IMR-90 (cell line): ENCODE measurements at regions of chr9 and their contacts with region 1.

Region 1: GRCh38 chr9:14361074-14361473 is 47.1 kb upstream of the NFIB start:
- DNase-seq: peak; percentile 37
- ATAC-seq: no peak
- H3K4me3 ChIP-seq: no peak overlapping the region
- H3K27ac ChIP-seq: no peak overlapping the region
- H3K4me1 ChIP-seq: peaks cover 3% of the 10 kb centered on the region; the same call in 1 of the 2 replicates
- H3K27me3 ChIP-seq: peaks cover 26% of the 10 kb centered on the region
- CTCF ChIP-seq: no peak
- POLR2A ChIP-seq: no peak
- RAD21 ChIP-seq: no peak

Region 2: GRCh38 chr9:12775679-12776512 is 1585.2 kb before region 1 on chr9:
- CTCF ChIA-PET with region 1: no interaction called
- POLR2A ChIA-PET with region 1: interaction called, 10 read pairs
- dilution Hi-C with region 1: no loop called
- in situ Hi-C with region 1: no loop called
- intact Hi-C with region 1: no loop called
- DNase-seq: peak; percentile 89
- ATAC-seq: peak; percentile 84
- H3K4me3 ChIP-seq: peak overlapping the region; percentile 91
- H3K27ac ChIP-seq: peak overlapping the region; percentile 96
- H3K4me1 ChIP-seq: peaks cover 5% of the 10 kb centered on the region
- H3K27me3 ChIP-seq: no peaks in the 10 kb centered on the region
- CTCF ChIP-seq: peak; percentile 53
- POLR2A ChIP-seq: peak; percentile 45; the same call in 1 of the 2 replicates
- RAD21 ChIP-seq: peak; percentile 64; the same call in 1 of the 2 replicates